CD4-positive, alpha-beta memory T cell (primary cell): ENCODE measurements at regions of chr6 and their contacts with region 1.

Region 1: GRCh38 chr6:149147938-149148718 is 169.4 kb upstream of the TAB2 start:
- DNase-seq: peak; percentile 66 to 85 (median 75)
- H3K4me3 ChIP-seq: no peak overlapping the region
- H3K4me3 Mint-ChIP-seq: peak overlapping the region in 7 of 8 donors; percentile 27 to 80 (median 46)
- H3K27ac ChIP-seq: peak overlapping the region; percentile 78
- H3K27ac Mint-ChIP-seq: peak overlapping the region; percentile 87 to 98 (median 96)
- H3K4me1 ChIP-seq: peaks cover 72% of the 10 kb centered on the region
- H3K4me1 Mint-ChIP-seq: peaks cover 53 to 89% (median 71%) of the 10 kb centered on the region in 4 donors
- H3K27me3 ChIP-seq: no peaks in the 10 kb centered on the region
- H3K27me3 Mint-ChIP-seq: no peaks in the 10 kb centered on the region

Region 2: GRCh38 chr6:148999929-149000468 is 148.1 kb before region 1 on chr6:
- CTCF ChIA-PET with region 1: no interaction called
- POLR2A ChIA-PET with region 1: no interaction called
- intact Hi-C with region 1: no loop called
- DNase-seq: no peak
- H3K4me3 ChIP-seq: no peak overlapping the region
- H3K4me3 Mint-ChIP-seq: peak overlapping the region in 5 of 8 donors; percentile 42 to 75 (median 67)
- H3K27ac ChIP-seq: no peak overlapping the region
- H3K27ac Mint-ChIP-seq: peak overlapping the region in 6 of 7 donors; percentile 3 to 70 (median 44)
- H3K4me1 ChIP-seq: peaks cover 13% of the 10 kb centered on the region
- H3K4me1 Mint-ChIP-seq: peaks cover 15 to 31% (median 23%) of the 10 kb centered on the region in 4 donors
- H3K27me3 ChIP-seq: no peaks in the 10 kb centered on the region
- H3K27me3 Mint-ChIP-seq: no peaks in the 10 kb centered on the region

Region 3: DNA sequence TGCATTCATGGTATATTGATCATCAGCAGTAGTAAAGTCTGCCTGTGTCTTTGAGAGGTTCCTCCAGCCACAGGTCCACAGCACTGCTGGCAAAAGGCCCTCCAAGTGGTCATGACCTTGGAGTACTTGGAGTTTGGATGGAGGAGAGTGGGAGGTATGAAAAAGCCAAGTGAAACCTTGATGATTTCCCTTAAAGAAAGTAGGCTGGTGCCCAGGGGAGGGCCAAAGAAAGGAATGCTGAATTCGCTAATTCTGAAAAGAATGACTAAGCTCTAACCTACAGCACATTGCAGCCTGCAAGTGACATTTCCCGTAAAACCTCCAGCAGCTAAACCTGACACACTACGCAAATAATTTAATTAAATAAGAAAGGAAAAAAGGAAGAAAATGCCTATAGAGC is 54.0 kb before region 1 on chr6:
- CTCF ChIA-PET with region 1: no interaction called
- POLR2A ChIA-PET with region 1: interaction called, 12 read pairs
- intact Hi-C with region 1: no loop called
- DNase-seq: peak in 1 of 5 donors; percentile 12
- H3K4me3 ChIP-seq: peak overlapping the region in 1 of 2 donors; percentile 13
- H3K4me3 Mint-ChIP-seq: peak overlapping the region; percentile 57 to 76 (median 68)
- H3K27ac ChIP-seq: peak overlapping the region; percentile 27
- H3K27ac Mint-ChIP-seq: peak overlapping the region; percentile 74 to 96 (median 92)
- H3K4me1 ChIP-seq: peaks cover 65% of the 10 kb centered on the region
- H3K4me1 Mint-ChIP-seq: peaks cover 36 to 63% (median 52%) of the 10 kb centered on the region in 4 donors
- H3K27me3 ChIP-seq: no peaks in the 10 kb centered on the region
- H3K27me3 Mint-ChIP-seq: no peaks in the 10 kb centered on the region

Region 4: GRCh38 chr6:149129371-149130077 is 18.6 kb before region 1 on chr6:
- CTCF ChIA-PET with region 1: interaction called, 7 read pairs
- POLR2A ChIA-PET with region 1: interaction called, 20 read pairs
- intact Hi-C with region 1: no loop called
- DNase-seq: no peak
- H3K4me3 ChIP-seq: no peak overlapping the region
- H3K4me3 Mint-ChIP-seq: peak overlapping the region in 4 of 8 donors; percentile 0 to 74 (median 16)
- H3K27ac ChIP-seq: no peak overlapping the region
- H3K27ac Mint-ChIP-seq: peak overlapping the region; percentile 85 to 94 (median 93)
- H3K4me1 ChIP-seq: peaks cover 76% of the 10 kb centered on the region
- H3K4me1 Mint-ChIP-seq: peaks cover 45 to 77% (median 64%) of the 10 kb centered on the region in 4 donors
- H3K27me3 ChIP-seq: no peaks in the 10 kb centered on the region
- H3K27me3 Mint-ChIP-seq: no peaks in the 10 kb centered on the region

Region 5: DNA sequence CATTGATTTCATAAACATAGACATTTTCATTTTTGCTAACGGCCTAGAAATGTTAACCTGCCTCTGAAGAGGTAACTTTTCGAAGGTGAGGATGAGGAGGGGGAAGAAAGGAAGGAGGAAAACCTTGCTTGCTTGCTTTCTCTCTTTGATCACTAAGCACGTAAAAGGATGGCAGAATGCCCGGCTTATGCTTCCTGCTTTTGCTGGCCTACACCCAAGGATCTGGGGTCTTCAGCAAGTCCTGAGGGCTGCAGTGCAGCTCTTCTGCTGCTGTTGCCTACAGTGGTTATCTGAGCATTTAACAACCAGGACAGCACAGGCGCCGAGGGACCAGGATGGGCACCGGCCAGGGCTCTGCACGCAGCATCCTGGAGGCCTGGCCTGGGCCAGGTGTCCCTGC is 18.6 kb after region 1 on chr6:
- CTCF ChIA-PET with region 1: interaction called, 5 read pairs
- POLR2A ChIA-PET with region 1: interaction called, 13 read pairs
- intact Hi-C with region 1: no loop called
- DNase-seq: no peak
- H3K4me3 ChIP-seq: no peak overlapping the region
- H3K4me3 Mint-ChIP-seq: peak overlapping the region in 6 of 8 donors; percentile 30 to 82 (median 66)
- H3K27ac ChIP-seq: no peak overlapping the region
- H3K27ac Mint-ChIP-seq: peak overlapping the region in 6 of 7 donors; percentile 5 to 86 (median 53)
- H3K4me1 ChIP-seq: peaks cover 31% of the 10 kb centered on the region
- H3K4me1 Mint-ChIP-seq: peaks cover 23 to 47% (median 38%) of the 10 kb centered on the region in 4 donors
- H3K27me3 ChIP-seq: no peaks in the 10 kb centered on the region
- H3K27me3 Mint-ChIP-seq: no peaks in the 10 kb centered on the region

Region 6: DNA sequence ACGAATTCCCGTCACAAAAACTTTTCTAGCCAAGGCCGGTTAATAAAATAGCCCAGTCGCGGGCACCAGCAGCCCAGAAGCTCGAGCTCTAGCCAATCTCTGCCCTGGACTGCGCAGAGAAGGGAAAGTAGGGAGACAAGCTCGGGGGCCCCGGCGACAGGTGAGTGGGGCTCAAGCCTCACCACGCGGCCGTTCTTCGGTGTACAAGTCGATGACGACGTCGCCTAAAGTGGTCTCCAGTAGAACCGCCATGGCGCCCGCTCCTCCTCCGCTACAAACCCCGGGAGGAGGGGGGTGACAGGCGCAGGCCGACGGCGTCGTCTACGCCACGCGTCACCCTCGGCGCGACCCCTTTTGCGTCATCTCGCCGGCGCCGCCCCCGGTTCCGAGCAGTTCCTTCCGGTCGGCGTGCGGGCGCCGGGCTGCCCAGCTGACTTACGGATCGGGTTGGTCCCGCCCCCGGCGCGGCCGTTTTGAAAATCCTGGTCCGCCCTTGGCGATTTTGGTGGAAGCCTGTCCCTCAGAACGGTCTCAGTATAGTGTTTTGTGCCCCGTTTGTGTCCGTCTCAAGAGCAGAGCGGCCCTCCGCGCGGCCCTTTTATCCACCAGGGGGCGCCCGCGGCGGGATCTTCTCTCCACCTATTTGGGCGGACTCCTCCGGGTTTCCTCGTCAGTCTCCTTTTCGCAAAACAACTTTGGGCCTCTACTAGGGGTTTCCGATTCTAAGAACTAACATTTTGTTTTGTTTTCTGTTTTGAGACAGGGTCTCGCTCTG is 397.8 kb after region 1 on chr6 and contains the start of gene PPIL4:
- CTCF ChIA-PET with region 1: no interaction called
- POLR2A ChIA-PET with region 1: no interaction called
- intact Hi-C with region 1: no loop called
- DNase-seq: peak; percentile 94 to 98 (median 97)
- H3K4me3 ChIP-seq: peak within 1 kb of the TSS; percentile 68 to 74
- H3K4me3 Mint-ChIP-seq: peak within 1 kb of the TSS; percentile 97 to 100 (median 98)
- H3K27ac ChIP-seq: peak within 1 kb of the TSS; percentile 100
- H3K27ac Mint-ChIP-seq: peak within 1 kb of the TSS; percentile 98 to 100 (median 100)
- H3K4me1 ChIP-seq: peaks cover 32% of the 10 kb centered on the region
- H3K4me1 Mint-ChIP-seq: peaks cover 27 to 50% (median 38%) of the 10 kb centered on the region in 4 donors
- H3K27me3 ChIP-seq: no peaks in the 10 kb centered on the region
- H3K27me3 Mint-ChIP-seq: peaks cover 0 to 3% of the 10 kb centered on the region in 2 donors
- total RNA-seq, gene PPIL4: 33.1 to 35.7 TPM